ENCODE measurements at regions of chr19 and their contacts with region 1.

Region 1: GRCh38 chr19:46076951-46077816 is 36.4 kb upstream of the IGFL4 start:
- DNase-seq: no peak
- H3K4me3 ChIP-seq: no peak overlapping the region
- H3K27me3 ChIP-seq: peaks cover 26% of the 10 kb centered on the region
- CTCF ChIP-seq: peak; percentile 99

Region 2: DNA sequence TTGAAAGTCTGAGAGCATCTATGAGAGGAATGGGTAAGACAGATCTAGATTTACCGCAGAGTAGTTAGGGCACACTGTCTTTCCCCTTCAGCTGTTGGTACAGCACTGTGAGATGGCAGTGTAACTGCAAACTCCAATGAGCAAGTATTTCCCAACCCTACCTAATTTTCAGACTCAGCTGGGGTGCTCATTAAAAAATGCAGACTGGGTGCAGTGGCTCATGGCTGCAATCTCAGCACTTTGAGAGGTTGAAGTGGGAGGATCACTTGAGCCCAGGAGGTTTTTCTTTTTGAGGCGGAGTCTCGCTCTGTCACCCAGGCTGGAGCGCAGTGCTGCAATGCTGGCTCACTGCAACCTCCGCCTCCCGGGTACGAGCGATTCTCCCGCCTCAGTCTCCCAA is 372.1 kb before region 1 on chr19:
- CTCF ChIA-PET with region 1: no interaction called
- POLR2A ChIA-PET with region 1: no interaction called
- DNase-seq: no peak
- H3K4me3 ChIP-seq: no peak overlapping the region
- H3K27me3 ChIP-seq: no peaks in the 10 kb centered on the region
- CTCF ChIP-seq: no peak

Region 3: GRCh38 chr19:46021531-46022041 is 55.6 kb before region 1 on chr19:
- CTCF ChIA-PET with region 1: interaction called, 212 read pairs
- POLR2A ChIA-PET with region 1: no interaction called
- DNase-seq: no peak
- H3K4me3 ChIP-seq: no peak overlapping the region
- H3K27me3 ChIP-seq: peaks cover 4% of the 10 kb centered on the region
- CTCF ChIP-seq: no peak

Region 4: DNA sequence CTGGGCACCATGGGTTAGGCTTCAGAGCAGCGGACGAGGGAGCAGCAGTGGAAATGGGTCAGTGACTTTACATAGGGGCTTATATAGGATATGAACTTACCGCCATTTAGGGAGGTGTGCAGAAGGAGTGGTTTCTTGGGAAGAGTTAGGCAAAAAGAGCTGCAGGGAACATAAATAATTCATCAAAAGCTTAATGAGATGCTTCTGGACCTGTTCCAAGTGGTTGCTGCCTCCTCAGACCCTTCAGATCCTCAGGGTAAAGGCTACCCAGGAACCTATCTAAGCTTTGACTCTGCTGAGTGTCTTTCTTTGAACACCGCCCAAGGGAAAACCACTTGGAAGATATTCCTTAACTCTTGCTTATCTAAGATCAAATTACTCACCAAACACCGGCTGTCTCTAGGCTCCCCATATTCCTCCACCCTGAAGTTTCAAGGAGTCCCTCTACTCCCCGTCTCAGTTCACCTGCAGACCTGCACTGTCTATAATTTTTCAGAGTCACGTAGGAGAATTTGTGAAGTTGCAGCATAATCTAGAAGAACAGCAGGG is 36.2 kb before region 1 on chr19 and contains the start of gene IGFL4:
- CTCF ChIA-PET with region 1: interaction called, 16 read pairs
- POLR2A ChIA-PET with region 1: no interaction called
- DNase-seq: no peak
- H3K4me3 ChIP-seq: no peak within 1 kb of the TSS
- H3K27me3 ChIP-seq: peaks cover 33% of the 10 kb centered on the region
- CTCF ChIP-seq: no peak
- polyA plus RNA-seq, gene IGFL4: not detected in 2 replicates

Region 5: GRCh38 chr19:46063201-46063600 is 14.0 kb before region 1 on chr19:
- CTCF ChIA-PET with region 1: interaction called, 23 read pairs
- POLR2A ChIA-PET with region 1: no interaction called
- DNase-seq: no peak
- H3K4me3 ChIP-seq: no peak overlapping the region
- H3K27me3 ChIP-seq: peaks cover 8% of the 10 kb centered on the region
- CTCF ChIP-seq: no peak

Region 6: DNA sequence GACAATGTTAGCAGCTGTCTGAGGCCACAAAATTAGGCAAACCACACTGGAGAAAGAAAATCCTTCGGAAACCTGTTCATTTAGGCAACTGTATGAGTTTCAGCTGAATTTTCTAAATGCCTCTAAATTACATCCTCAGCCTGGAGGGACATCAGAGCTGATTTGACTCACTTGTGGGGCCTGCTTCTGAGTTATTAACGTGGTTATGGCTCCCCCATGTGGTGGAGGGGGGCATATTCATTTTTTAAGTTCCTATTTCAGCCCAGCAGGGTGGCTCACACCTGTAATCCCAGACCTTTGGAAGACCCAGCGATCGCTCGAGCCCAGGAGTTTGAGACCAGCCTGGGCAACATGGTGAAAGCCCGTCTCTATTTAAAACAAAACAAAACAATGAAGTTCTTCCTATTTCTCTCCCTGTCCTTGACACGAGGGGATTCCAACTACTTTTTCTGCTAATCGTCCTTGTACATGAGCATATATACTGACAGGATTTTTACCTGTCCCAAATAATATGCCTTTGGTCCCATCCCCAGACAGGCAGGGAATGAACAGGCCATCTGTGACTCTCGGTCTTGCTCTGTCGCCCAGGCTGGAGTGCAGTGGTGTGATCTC is 188.1 kb after region 1 on chr19:
- CTCF ChIA-PET with region 1: interaction called, 77 read pairs
- POLR2A ChIA-PET with region 1: no interaction called
- DNase-seq: peak; percentile 34
- H3K4me3 ChIP-seq: no peak overlapping the region
- H3K27me3 ChIP-seq: peaks cover 10% of the 10 kb centered on the region
- CTCF ChIP-seq: peak; percentile 82

Measured in BJ (cell line).